MCF 10A (cell line): ENCODE measurements at regions of chr7 and their contacts with region 1.

Region 1: GRCh38 chr7:138954545-138955475 is 26.4 kb downstream of the KIAA1549 start:
- DNase-seq: no peak
- H3K4me3 Mint-ChIP-seq: no peak overlapping the region
- H3K27ac Mint-ChIP-seq: peak overlapping the region; percentile 3
- H3K4me1 Mint-ChIP-seq: peaks cover 32% of the 10 kb centered on the region
- H3K27me3 Mint-ChIP-seq: no peaks in the 10 kb centered on the region
- CTCF ChIP-seq: no peak

Region 2: DNA sequence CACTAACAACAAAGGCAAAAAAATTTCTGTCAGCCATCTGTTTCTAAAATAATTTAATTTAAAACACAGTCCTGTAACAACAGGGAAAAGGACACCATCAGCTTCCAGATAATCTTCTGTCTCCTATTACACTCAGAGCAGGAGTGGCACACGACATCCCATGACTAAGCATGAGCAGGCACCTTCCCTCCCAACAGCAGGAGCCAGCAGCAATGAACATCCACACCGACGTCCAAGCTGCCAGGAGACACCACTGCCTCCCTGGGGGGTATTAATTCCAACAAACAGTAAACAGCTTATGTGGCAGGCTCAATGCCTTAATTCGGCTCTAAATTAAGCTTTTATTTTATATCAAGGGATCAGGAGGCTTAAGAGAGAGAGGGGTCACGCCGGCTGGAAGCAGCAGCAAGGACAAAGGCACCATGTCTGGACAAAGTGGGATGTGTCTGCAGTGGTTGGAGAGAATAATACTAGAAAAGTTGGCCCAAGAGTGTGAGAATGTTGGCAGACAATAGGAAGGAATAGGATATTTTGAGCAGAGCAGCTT is 19.3 kb before region 1 on chr7:
- CTCF ChIA-PET with region 1: interaction called, 3 read pairs
- POLR2A ChIA-PET with region 1: interaction called, 11 read pairs
- intact Hi-C with region 1: no loop called
- DNase-seq: peak; percentile 87
- H3K4me3 Mint-ChIP-seq: no peak overlapping the region
- H3K27ac Mint-ChIP-seq: peak overlapping the region; percentile 79
- H3K4me1 Mint-ChIP-seq: peaks cover 16% of the 10 kb centered on the region
- H3K27me3 Mint-ChIP-seq: no peaks in the 10 kb centered on the region
- CTCF ChIP-seq: no peak

Region 3: DNA sequence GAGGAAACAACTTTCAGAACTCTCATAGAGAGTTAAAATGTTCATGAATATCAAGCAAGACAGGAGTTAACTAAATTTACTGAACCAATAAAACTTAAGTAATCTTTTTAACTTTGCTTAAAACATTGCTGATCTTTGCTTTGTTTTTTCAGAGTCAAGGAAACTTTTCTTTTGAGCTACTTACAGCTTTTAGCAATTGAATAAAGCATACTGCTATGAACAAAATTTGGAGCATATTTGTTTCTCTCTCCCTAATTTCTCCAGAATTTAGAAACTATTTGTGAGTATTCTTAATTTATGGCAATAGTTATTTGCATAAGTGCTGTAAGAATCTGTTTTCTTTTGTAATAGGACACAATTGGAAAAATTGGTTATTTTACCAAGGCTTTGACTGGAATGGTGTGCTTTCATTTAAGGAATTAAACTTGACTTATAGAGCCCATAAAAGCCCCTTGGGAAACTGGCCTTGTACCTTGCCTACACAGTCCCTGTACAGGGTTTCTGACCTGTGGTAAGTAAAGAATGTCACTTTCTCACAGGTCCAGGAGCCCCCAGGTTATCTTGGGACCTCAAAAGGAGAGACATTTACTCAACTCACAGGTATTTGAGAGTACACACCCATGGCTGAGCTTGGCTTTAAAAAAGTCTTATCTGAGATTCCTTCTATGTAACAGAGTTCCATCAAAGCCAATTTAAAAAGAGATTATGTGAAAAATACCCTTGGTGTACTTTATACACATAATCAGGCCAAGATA is 49.7 kb after region 1 on chr7:
- CTCF ChIA-PET with region 1: no interaction called
- POLR2A ChIA-PET with region 1: no interaction called
- intact Hi-C with region 1: no loop called
- DNase-seq: no peak
- H3K4me3 Mint-ChIP-seq: no peak overlapping the region
- H3K27ac Mint-ChIP-seq: no peak overlapping the region
- H3K4me1 Mint-ChIP-seq: no peaks in the 10 kb centered on the region
- H3K27me3 Mint-ChIP-seq: no peaks in the 10 kb centered on the region
- CTCF ChIP-seq: no peak